Heart left ventricle (tissue), 16 donors: ENCODE measurements at regions of chrX and their contacts with region 1.

Region 1: GRCh38 chrX:134807039-134807731 is 148.9 kb upstream of the PLAC1 start:
- DNase-seq: peak; percentile 87 to 91 (median 90)
- ATAC-seq: peak; percentile 93 to 97 (median 93)
- H3K4me3 ChIP-seq: peak overlapping the region; percentile 15 to 91 (median 68)
- H3K27ac ChIP-seq: peak overlapping the region; percentile 46 to 95 (median 88)
- H3K4me1 ChIP-seq: peaks cover 0 to 3% (median 0%) of the 10 kb centered on the region in 12 donors
- H3K27me3 ChIP-seq: peaks cover 0 to 4% (median 0%) of the 10 kb centered on the region in 9 donors
- CTCF ChIP-seq: no peak
- POLR2A ChIP-seq: peak in 1 of 2 donors; percentile 52

Region 2: DNA sequence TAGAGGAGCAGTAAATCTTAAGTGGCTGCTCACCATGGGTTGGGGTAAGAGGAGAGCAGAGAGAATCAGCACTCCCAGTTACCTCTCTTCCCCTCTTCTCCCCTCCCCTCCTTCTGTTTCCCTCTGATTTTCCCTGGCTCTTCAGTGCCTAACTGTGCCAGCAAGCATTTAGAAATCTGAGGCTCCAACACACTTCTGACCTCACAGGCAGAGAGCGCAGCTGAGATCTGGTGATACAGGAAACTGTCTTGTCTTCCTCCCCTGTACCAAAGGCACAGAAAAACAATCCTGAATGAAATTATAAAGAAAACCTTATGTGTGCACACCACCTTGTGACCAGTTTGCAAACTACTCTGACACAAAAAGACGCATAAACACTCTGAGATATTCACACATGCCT is 101.2 kb after region 1 on chrX:
- intact Hi-C with region 1: loop called in 1 of 10 experiments (anchors 10 kb)
- DNase-seq: no peak
- ATAC-seq: peak in 2 of 4 donors; percentile 31 to 44
- H3K4me3 ChIP-seq: no peak overlapping the region
- H3K27ac ChIP-seq: no peak overlapping the region
- H3K4me1 ChIP-seq: peaks cover 0 to 3% (median 0%) of the 10 kb centered on the region in 12 donors
- H3K27me3 ChIP-seq: no peaks in the 10 kb centered on the region
- CTCF ChIP-seq: peak in 3 of 12 donors; percentile 16 to 23 (median 20)
- POLR2A ChIP-seq: no peak

Region 3: GRCh38 chrX:135015523-135016245 is 208.5 kb after region 1 on chrX:
- intact Hi-C with region 1: no loop called
- DNase-seq: no peak
- ATAC-seq: no peak
- H3K4me3 ChIP-seq: no peak overlapping the region
- H3K27ac ChIP-seq: no peak overlapping the region
- H3K4me1 ChIP-seq: peaks cover 0 to 6% (median under 1%) of the 10 kb centered on the region in 12 donors
- H3K27me3 ChIP-seq: peaks cover 0 to 10% (median 0%) of the 10 kb centered on the region in 9 donors
- CTCF ChIP-seq: no peak
- POLR2A ChIP-seq: no peak